Mammary epithelial cell (primary cell): ENCODE measurements at regions of chr18 and their contacts with region 1.

Region 1: DNA sequence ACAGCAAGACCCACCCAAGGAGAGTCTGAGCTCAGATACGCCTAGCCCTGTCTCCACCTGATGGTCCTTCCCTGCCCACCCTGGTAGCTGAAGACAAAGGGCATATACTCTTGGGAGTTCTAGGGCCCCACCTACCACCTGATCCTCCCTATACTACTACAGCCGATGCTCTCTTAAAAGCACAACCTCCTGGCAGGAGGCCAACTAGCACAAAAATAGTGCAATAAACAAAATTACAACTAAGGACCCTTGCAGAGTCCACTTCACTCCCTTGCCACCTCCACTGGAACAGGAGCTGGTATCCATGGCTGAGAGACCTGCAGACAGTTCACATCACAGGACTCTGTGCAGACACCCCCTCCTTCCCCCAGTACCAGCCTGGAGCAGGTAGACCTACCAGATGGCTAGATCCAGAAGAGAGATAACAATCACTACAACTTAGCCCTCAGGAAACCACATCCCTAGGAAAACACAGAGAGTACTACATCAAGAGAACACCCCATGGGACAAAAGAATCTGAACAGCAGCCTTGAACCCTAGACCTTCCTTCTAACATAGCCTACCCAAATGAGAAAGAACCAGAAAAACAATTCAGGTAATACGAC is 49.9 kb downstream of the FBXO15 start:
- DNase-seq: no peak
- H3K4me3 ChIP-seq: no peak overlapping the region
- H3K27ac ChIP-seq: no peak overlapping the region
- H3K4me1 ChIP-seq: no peaks in the 10 kb centered on the region
- H3K27me3 ChIP-seq: no peaks in the 10 kb centered on the region
- CTCF ChIP-seq: no peak

Region 2: DNA sequence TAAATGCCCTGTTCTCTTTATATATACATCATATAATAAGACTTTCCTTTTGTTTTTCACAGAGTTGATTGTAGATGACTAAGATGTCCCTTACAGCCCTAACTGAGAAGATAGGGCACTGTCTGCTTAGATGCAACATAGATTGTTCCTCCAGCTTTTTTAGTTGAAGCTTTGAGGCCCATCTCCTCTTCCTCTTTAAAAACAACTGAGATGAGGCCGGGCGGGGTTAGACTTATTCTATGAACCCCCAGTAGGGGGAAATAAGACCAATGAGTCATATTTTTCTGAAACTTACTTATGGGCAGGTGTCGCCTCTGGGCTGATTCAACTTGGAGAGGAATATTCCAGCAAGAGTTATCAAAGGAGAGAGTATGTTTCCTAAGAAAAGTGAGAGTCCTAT is 34.7 kb before region 1 on chr18:
- CTCF ChIA-PET with region 1: no interaction called
- dilution Hi-C with region 1: loop called (anchors 5 kb)
- in situ Hi-C with region 1: no loop called
- intact Hi-C with region 1: no loop called
- DNase-seq: no peak
- H3K4me3 ChIP-seq: no peak overlapping the region
- H3K27ac ChIP-seq: no peak overlapping the region
- H3K4me1 ChIP-seq: no peaks in the 10 kb centered on the region
- H3K27me3 ChIP-seq: no peaks in the 10 kb centered on the region
- CTCF ChIP-seq: no peak